ENCODE measurements at regions of chr12 and their contacts with region 1.

Region 1: GRCh38 chr12:49232940-49233841 is 31.7 kb upstream of the TUBA1C start:
- DNase-seq: no peak
- ATAC-seq: no peak
- H3K4me3 ChIP-seq: no peak overlapping the region
- H3K27ac ChIP-seq: 0 out of 2 replicates have a peak overlapping the region, but pooled peaks have one; percentile 14
- H3K4me1 ChIP-seq: peaks cover 4% of the 10 kb centered on the region; the same call in 1 of the 2 replicates
- H3K27me3 ChIP-seq: no peaks in the 10 kb centered on the region
- CTCF ChIP-seq: no peak

Region 2: DNA sequence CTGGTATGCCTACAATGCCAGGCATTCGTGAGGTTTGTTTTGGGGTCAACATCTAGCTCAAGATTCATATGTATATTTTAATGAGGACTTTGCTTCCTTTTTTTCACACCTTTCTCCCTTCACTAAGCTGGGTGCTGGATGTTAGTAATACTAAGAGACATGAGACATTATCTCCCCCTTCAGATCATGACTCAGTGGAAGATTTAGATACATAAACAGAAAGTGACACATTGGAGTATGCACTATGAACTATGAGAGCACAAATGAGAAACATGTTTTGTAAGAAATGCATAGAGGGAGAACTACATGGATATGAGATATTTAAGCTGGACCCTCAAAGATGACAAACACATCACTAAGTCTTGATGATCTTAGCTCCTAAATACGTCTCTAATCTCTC is 1813.7 kb before region 1 on chr12:
- CTCF ChIA-PET with region 1: no interaction called
- POLR2A ChIA-PET with region 1: no interaction called
- in situ Hi-C with region 1: no loop called
- intact Hi-C with region 1: no loop called
- DNase-seq: no peak
- ATAC-seq: no peak
- H3K4me3 ChIP-seq: no peak overlapping the region
- H3K27ac ChIP-seq: no peak overlapping the region
- H3K4me1 ChIP-seq: no peaks in the 10 kb centered on the region
- H3K27me3 ChIP-seq: no peaks in the 10 kb centered on the region; the same call in 1 of the 2 replicates
- CTCF ChIP-seq: no peak

Region 3: DNA sequence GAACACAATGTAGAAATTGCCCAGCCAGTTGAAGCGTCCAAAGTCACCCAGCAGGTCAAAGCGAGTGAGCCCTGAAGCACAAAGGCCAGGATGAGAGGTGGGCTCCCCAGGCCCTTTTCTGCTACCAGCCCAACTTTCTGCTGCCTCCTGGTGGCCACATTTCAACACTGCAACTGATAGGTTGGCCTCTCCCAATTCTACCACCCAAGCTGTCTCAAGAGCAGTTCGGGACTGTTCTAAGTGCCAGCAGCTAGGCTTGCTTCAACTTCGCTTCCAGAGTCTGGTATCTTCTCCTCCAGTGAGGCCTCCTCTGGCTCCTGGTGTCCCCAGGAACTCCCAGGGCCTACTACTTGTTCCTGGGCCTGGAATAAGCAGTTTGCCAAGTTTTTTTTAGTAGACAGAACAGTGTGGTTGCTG is 135.1 kb before region 1 on chr12:
- CTCF ChIA-PET with region 1: no interaction called
- POLR2A ChIA-PET with region 1: no interaction called
- in situ Hi-C with region 1: no loop called
- intact Hi-C with region 1: no loop called
- DNase-seq: peak; percentile 38
- ATAC-seq: peak; percentile 41; the same call in 1 of the 2 replicates
- H3K4me3 ChIP-seq: no peak overlapping the region
- H3K27ac ChIP-seq: no peak overlapping the region
- H3K4me1 ChIP-seq: peaks cover 11% of the 10 kb centered on the region
- H3K27me3 ChIP-seq: no peaks in the 10 kb centered on the region
- CTCF ChIP-seq: peak; percentile 92

Region 4: GRCh38 chr12:49208146-49208545 is 25.0 kb before region 1 on chr12:
- CTCF ChIA-PET with region 1: no interaction called
- POLR2A ChIA-PET with region 1: no interaction called
- in situ Hi-C with region 1: no loop called
- intact Hi-C with region 1: no loop called
- DNase-seq: no peak
- ATAC-seq: no peak
- H3K4me3 ChIP-seq: no peak overlapping the region
- H3K27ac ChIP-seq: no peak overlapping the region
- H3K4me1 ChIP-seq: no peaks in the 10 kb centered on the region
- H3K27me3 ChIP-seq: no peaks in the 10 kb centered on the region
- CTCF ChIP-seq: no peak

Region 5: DNA sequence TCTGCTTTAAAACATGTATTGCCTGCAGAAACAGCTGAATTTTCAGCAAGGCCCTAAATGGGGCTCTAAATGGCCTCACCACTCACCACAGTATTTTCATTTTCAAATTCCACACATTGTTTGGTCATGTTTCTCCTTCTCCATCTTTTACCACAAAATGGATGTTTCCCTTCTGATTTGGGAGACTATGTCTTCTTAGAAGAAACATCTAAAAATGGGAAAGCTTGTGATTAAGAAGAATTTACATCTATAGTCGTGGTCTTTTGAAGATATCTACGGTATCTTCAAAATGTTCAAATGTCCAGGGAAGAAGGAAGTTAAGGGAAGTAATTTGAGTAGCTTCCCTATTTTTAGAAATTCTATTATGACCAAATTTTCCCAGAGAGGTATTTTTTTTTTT is 11.0 kb after region 1 on chr12:
- CTCF ChIA-PET with region 1: interaction called, 12 read pairs
- POLR2A ChIA-PET with region 1: interaction called, 3 read pairs
- in situ Hi-C with region 1: no loop called
- intact Hi-C with region 1: no loop called
- DNase-seq: no peak
- ATAC-seq: no peak
- H3K4me3 ChIP-seq: no peak overlapping the region
- H3K27ac ChIP-seq: no peak overlapping the region
- H3K4me1 ChIP-seq: no peaks in the 10 kb centered on the region
- H3K27me3 ChIP-seq: no peaks in the 10 kb centered on the region
- CTCF ChIP-seq: no peak

Region 6: GRCh38 chr12:49842519-49843352 is 609.5 kb after region 1 on chr12 and contains the start of gene BCDIN3D:
- CTCF ChIA-PET with region 1: no interaction called
- POLR2A ChIA-PET with region 1: no interaction called
- in situ Hi-C with region 1: no loop called
- intact Hi-C with region 1: no loop called
- DNase-seq: no peak
- ATAC-seq: peak; percentile 98
- H3K4me3 ChIP-seq: peak within 1 kb of the TSS; percentile 65 to 98
- H3K27ac ChIP-seq: peak within 1 kb of the TSS; percentile 86
- H3K4me1 ChIP-seq: peaks cover 16% of the 10 kb centered on the region
- H3K27me3 ChIP-seq: peaks cover under 1% of the 10 kb centered on the region; the same call in 1 of the 2 replicates
- CTCF ChIP-seq: no peak
- total RNA-seq, gene BCDIN3D: 4.8 TPM